ENCODE measurements at regions of chr3 and their contacts with region 1.

Region 1: GRCh38 chr3:66469220-66469904 is 31.5 kb downstream of the LRIG1 start:
- DNase-seq: no peak
- H3K4me3 ChIP-seq: no peak overlapping the region
- H3K27ac ChIP-seq: peak overlapping the region; percentile 2 to 31
- H3K4me1 ChIP-seq: peaks cover 10 to 33% of the 10 kb centered on the region in 2 donors
- H3K27me3 ChIP-seq: no peaks in the 10 kb centered on the region
- CTCF ChIP-seq: no peak

Region 2: DNA sequence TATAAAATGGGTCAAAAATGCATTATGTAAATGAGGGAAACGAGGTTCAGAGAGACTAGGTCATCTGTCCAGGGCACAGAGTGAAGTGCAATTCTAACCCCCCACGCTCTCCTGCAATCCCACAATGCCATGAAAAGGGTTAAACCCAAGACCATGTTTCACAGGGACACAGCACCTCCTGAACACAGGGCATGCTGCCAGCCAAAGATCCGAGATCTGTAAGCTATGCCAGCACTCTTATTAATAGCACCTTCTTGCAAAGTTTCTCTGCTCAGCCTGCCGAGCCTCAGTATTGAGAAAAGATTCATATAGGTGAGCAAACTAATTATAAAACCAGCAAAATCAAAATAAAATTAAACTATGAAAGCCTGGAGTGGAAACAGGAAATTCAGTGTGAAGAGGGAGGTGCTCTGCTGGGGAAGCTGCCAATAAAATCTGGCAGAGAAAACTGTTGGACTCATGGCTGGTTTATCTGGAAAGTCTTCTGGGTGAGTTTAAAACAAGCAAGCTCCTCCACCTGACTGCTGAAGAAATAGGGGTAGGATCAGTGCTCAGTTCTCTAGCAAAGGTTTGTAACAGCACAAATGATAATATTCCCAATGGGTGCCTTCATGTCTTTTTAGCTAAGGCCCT is 18.9 kb before region 1 on chr3:
- intact Hi-C with region 1: loop called (anchors 2 kb)
- DNase-seq: peak in 1 of 2 donors; percentile 80
- H3K4me3 ChIP-seq: peak overlapping the region in 1 of 2 donors; percentile 23
- H3K27ac ChIP-seq: peak overlapping the region; percentile 79 to 84
- H3K4me1 ChIP-seq: peaks cover 39 to 67% of the 10 kb centered on the region in 2 donors
- H3K27me3 ChIP-seq: no peaks in the 10 kb centered on the region
- CTCF ChIP-seq: no peak

Region 3: GRCh38 chr3:66483406-66483906 is 14.1 kb after region 1 on chr3:
- intact Hi-C with region 1: loop called (anchors 2 kb)
- DNase-seq: no peak
- H3K4me3 ChIP-seq: peak overlapping the region in 1 of 2 donors; percentile 21
- H3K27ac ChIP-seq: peak overlapping the region; percentile 89 to 90
- H3K4me1 ChIP-seq: peaks cover 19 to 79% of the 10 kb centered on the region in 2 donors
- H3K27me3 ChIP-seq: no peaks in the 10 kb centered on the region
- CTCF ChIP-seq: no peak